ENCODE measurements at regions of chr17 and their contacts with region 1.

Region 1: GRCh38 chr17:7887482-7888183 is 956 bp upstream of the CHD3 start:
- DNase-seq: peak; percentile 91 to 96 (median 95)
- H3K4me3 ChIP-seq: peak overlapping the region; percentile 51 to 96 (median 82)
- H3K27ac ChIP-seq: peak overlapping the region; percentile 47 to 83
- H3K4me1 ChIP-seq: peaks cover 7 to 60% (median 51%) of the 10 kb centered on the region in 4 experiments
- H3K27me3 ChIP-seq: no peaks in the 10 kb centered on the region

Region 2: GRCh38 chr17:7862692-7863437 is 24.8 kb before region 1 on chr17:
- CTCF ChIA-PET with region 1: interaction called, 60 read pairs
- POLR2A ChIA-PET with region 1: interaction called, 3 read pairs
- DNase-seq: peak in 2 of 3 donors; percentile 66 to 78
- H3K4me3 ChIP-seq: no peak overlapping the region
- H3K27ac ChIP-seq: no peak overlapping the region
- H3K4me1 ChIP-seq: peaks cover 10 to 25% (median 20%) of the 10 kb centered on the region in 4 experiments
- H3K27me3 ChIP-seq: no peaks in the 10 kb centered on the region

Region 3: DNA sequence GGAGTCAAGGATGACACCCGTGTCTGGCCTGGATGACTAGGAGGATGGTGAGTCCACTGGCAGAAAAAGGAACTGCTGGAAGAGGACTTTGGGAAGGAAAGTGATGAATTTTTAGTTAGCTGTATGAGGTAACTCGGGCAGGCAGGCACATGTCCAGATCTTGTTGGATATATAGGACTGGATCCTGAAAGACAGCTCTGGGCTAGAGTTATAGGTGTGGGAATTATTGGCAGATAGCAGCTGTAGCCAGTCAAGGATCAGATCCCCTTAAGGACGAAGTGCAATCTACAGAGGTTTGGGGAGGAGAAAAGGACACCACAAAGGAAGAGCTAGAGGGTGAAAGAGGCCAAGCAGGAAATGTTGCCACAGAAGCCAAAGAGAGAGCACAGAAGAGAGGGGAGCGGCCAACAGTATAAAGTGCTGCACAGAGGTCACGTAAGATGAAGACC is 19.7 kb before region 1 on chr17:
- CTCF ChIA-PET with region 1: interaction called, 60 read pairs
- POLR2A ChIA-PET with region 1: interaction called, 3 read pairs
- DNase-seq: peak in 1 of 3 donors; percentile 30
- H3K4me3 ChIP-seq: peak overlapping the region in 6 of 7 experiments; percentile 8 to 68 (median 23)
- H3K27ac ChIP-seq: peak overlapping the region in 1 of 2 experiments; percentile 41
- H3K4me1 ChIP-seq: peaks cover 23 to 39% (median 35%) of the 10 kb centered on the region in 4 experiments
- H3K27me3 ChIP-seq: no peaks in the 10 kb centered on the region

Measured in common myeloid progenitor, CD34-positive (primary cell).